Mucosa of descending colon (tissue), 3 donors: ENCODE measurements at regions of chr6 and their contacts with region 1.

Region 1: GRCh38 chr6:108541838-108542759 is 18.6 kb upstream of the FOXO3 start:
- DNase-seq: peak in 2 of 3 donors; percentile 67 to 83
- ATAC-seq: peak; percentile 94
- H3K4me3 ChIP-seq: no peak overlapping the region
- H3K4me1 ChIP-seq: no peaks in the 10 kb centered on the region
- CTCF ChIP-seq: peak; percentile 65

Region 2: DNA sequence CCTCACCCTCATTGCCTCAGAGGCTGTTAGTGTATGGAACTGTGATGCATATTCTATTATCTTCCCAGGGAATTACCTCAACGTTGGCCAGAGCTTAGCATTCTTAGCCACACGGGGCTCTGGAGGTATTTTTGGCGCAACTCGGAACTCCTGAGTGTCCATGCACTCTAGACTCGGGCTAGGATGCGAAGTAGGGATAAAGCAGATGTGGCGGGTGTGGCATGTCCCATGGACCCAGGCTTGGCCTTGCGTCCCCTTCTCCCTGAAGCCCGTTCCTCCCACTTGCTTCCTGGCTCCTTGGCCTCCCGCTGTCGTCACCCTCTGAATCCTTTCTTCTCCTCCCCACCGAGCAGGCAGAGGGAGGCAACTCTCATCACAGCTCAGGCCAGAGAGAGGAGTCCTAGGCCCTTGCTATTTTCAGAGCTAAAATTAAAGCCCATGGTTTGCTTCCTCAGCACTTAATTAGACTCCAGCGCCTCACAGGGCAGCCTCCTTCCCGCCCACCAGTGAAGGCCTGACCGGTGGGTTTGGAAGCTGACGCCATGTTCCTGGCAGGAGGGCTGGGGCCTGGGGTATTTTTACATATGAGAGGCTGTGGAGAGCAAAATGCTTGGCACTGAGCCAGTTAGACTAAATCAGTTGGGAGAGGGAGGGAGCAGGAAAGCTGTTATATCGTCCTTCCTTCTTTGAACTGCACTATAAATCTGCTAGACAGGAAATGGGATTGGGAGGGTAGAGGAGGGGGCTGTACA is 157.4 kb after region 1 on chr6:
- intact Hi-C with region 1: no loop called
- DNase-seq: no peak
- ATAC-seq: no peak
- H3K4me3 ChIP-seq: no peak overlapping the region
- H3K4me1 ChIP-seq: no peaks in the 10 kb centered on the region
- CTCF ChIP-seq: no peak

Region 3: DNA sequence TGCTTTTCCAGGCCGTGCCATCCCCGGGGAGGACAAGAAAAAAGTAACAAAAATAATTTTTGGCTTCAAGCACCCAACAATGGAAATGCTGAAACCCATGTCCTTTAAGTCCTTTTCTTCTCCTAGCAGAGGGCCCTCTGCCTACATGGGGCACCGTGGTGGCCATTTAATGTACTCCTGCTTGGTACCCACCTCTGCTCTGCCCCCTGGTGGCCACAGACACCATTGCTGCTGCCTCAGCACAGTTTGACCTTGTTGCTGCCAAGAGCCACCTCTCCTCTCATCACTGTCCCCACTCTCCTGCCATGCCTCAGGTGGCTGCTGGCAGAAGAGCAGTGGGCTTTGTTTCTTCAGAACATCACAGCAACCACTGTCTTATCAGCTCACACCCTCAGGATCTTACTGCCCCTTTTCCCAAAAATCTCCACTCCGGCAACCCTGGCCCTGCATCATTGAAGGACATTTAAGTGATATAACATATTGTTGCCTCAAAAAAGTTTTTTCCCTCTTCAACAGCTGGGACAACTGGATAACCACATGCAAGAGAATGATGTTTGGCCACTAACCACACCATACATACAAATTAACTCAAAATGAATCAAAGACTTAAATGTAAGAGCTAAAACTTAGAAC is 293.2 kb after region 1 on chr6:
- intact Hi-C with region 1: loop called (anchors 5 kb)
- DNase-seq: peak; percentile 87 to 95 (median 89)
- ATAC-seq: peak; percentile 99
- H3K4me3 ChIP-seq: no peak overlapping the region
- H3K4me1 ChIP-seq: no peaks in the 10 kb centered on the region
- CTCF ChIP-seq: peak; percentile 84

Region 4: GRCh38 chr6:108896111-108896661 is 354.1 kb after region 1 on chr6:
- intact Hi-C with region 1: loop called (anchors 5 kb)
- DNase-seq: no peak
- ATAC-seq: peak; percentile 52
- H3K4me3 ChIP-seq: no peak overlapping the region
- H3K4me1 ChIP-seq: no peaks in the 10 kb centered on the region
- CTCF ChIP-seq: no peak

Region 5: DNA sequence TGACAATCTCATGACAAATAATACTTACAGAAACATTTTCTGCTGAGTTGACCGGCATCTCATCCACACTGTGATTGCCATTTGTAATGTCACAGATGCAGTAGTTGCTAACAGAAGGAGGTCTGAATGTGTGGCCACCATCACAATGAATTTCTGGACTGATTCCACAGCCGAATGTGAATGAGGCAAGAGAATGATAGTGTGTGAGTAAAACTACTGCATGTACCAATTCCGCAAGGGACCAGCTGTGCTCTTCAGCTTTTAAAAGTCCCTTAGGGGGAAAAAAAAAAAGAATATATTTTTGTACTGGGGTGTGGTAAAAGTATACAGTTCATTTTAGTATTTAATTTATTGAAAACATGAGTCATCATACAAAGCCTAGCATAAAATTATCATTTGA is 456.4 kb after region 1 on chr6:
- intact Hi-C with region 1: no loop called
- DNase-seq: no peak
- ATAC-seq: no peak
- H3K4me3 ChIP-seq: no peak overlapping the region
- H3K4me1 ChIP-seq: peaks cover 14% of the 10 kb centered on the region
- CTCF ChIP-seq: no peak